ENCODE measurements at regions of chr14 and their contacts with region 1.

Region 1: DNA sequence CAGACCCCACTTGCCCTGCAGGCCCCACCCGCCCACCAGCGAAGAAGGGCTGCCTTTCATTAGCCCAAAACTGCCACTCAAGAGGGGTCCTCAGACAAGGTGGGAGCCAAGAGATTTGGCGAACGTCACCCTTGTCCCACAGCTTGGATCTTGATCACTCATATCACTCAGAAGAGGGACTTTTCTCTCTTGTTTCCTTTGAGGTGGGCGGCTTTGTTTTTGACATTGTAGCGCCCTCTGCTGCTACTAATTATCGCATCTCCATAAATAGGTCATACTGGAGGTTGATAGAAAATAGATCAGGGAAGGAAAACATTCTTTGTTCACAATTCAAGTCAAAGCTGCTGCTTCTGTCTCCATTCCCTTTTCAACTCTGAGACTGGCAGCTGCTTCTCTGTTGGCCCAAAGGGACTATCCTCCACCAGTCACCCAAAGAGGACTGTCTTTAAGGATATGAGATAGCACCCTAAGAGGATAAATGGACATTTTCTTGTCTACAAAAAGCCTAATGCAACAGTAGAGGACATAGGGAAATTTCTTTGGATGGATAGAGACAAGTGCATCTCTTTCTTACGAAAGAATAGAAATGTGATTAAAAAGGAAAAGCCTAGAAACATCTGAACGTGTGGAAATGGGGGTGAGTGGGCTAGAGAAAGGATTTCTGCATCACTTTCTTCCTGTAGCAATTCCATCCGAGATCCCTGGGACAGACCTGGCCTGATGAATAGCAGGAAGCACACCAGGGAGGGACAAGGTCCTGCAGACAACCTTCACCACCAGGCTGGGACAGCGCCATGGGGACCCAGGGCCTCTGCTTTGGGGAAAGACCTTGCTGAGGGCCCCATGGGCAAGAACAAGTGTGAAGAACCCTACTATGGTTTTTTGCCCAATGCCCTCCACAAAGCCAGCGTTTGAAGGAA is 115.8 kb downstream of the DAD1 start:
- DNase-seq: peak; percentile 82
- ATAC-seq: peak; percentile 56
- H3K4me3 ChIP-seq: no peak overlapping the region
- H3K4me3 Mint-ChIP-seq: no peak overlapping the region
- H3K27ac ChIP-seq: no peak overlapping the region
- H3K27ac Mint-ChIP-seq: peak overlapping the region; percentile 75
- H3K4me1 ChIP-seq: peaks cover 60 to 74% of the 10 kb centered on the region in 2 donors
- H3K4me1 Mint-ChIP-seq: peaks cover 89% of the 10 kb centered on the region
- H3K27me3 ChIP-seq: no peaks in the 10 kb centered on the region
- H3K27me3 Mint-ChIP-seq: no peaks in the 10 kb centered on the region
- CTCF ChIP-seq: peak; percentile 77

Region 2: DNA sequence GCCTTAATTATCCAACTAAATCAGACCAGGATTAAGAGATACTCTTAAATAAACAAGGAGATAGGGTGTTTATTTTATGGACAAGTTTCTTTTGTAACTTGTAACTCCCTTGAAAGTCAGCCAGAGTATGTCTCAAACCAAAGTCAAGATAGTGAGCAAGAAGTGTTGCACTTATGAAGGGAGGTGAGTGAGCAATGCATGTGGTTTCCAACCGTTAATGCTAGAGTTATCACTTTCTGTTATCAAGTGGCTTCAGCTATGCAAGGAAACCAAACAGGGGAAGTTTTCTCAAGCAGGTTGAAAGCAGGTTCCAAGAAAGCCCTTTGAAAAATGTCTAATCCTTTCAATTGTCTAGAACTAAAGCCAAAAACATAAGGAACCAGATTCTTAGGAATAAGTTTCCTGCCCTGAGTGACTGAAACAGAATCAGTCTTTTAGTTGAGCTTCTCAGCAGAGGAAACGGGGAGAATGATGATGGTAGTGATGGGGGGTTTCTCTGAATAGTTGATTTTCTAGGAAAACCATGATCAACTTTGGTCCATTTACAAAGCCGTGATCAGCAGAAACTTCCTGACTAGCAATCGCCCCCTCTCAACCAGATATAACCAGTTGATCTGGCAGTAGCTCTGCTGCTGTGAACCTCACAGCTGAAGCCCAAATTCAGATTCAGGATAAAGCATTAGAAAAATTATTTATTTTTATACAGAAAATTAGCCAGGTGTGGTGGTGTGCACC is 12.6 kb before region 1 on chr14:
- CTCF ChIA-PET with region 1: interaction called, 23 read pairs
- POLR2A ChIA-PET with region 1: no interaction called
- intact Hi-C with region 1: no loop called
- DNase-seq: no peak
- ATAC-seq: no peak
- H3K4me3 ChIP-seq: no peak overlapping the region
- H3K4me3 Mint-ChIP-seq: no peak overlapping the region
- H3K27ac ChIP-seq: no peak overlapping the region
- H3K27ac Mint-ChIP-seq: no peak overlapping the region
- H3K4me1 ChIP-seq: peaks cover 16 to 21% of the 10 kb centered on the region in 2 donors
- H3K4me1 Mint-ChIP-seq: peaks cover 28% of the 10 kb centered on the region
- H3K27me3 ChIP-seq: no peaks in the 10 kb centered on the region
- H3K27me3 Mint-ChIP-seq: no peaks in the 10 kb centered on the region
- CTCF ChIP-seq: no peak